ENCODE measurements at regions of chr18 and their contacts with region 1.

Region 1: DNA sequence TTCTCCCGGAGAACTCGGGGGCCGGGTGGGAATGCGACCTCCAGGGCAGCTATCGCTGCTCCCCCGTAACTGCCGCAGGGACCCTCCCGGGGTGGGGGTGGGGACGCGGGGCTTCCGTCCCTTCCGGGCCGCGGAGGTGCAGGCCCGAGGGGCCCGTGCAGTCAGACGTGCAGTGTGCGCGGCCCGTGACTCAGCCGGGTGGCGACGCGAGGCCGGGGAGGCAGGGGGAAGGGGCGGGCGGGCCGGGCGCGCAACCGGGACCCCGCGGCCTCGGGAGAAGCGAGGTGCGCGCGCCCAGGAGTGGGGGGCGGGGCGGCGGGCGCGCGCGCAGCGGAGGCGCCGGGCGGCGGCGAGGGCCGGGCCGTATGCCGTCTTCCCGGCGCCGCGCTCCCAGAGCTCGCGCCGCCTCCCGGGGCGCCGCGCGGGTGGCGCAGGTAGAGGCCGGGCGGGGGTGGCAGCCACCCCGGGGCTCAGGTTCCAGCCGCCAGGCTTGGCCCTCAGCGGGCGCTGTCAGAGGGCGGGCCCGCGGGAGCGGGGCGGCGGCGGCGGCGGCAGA is 25.0 kb upstream of the SMAD7 start:
- DNase-seq: peak in 1 of 2 donors; percentile 83
- H3K4me3 ChIP-seq: peak overlapping the region; percentile 93 to 94
- H3K27ac ChIP-seq: peak overlapping the region; percentile 84 to 89
- H3K4me1 ChIP-seq: peaks cover 4 to 6% of the 10 kb centered on the region in 2 donors
- H3K27me3 ChIP-seq: no peaks in the 10 kb centered on the region
- CTCF ChIP-seq: peak in 1 of 3 experiments; percentile 22

Region 2: GRCh38 chr18:48992699-48993555 is 17.2 kb after region 1 on chr18:
- intact Hi-C with region 1: loop called (anchors 1 kb)
- DNase-seq: no peak
- H3K4me3 ChIP-seq: no peak overlapping the region
- H3K27ac ChIP-seq: peak overlapping the region; percentile 77 to 86
- H3K4me1 ChIP-seq: peaks cover 30 to 62% of the 10 kb centered on the region in 2 donors
- H3K27me3 ChIP-seq: no peaks in the 10 kb centered on the region
- CTCF ChIP-seq: no peak

Region 3: GRCh38 chr18:49016631-49017539 is 41.2 kb after region 1 on chr18:
- intact Hi-C with region 1: loop called (anchors 1 kb)
- DNase-seq: peak in 1 of 2 donors; percentile 87
- H3K4me3 ChIP-seq: no peak overlapping the region
- H3K27ac ChIP-seq: peak overlapping the region; percentile 53 to 68
- H3K4me1 ChIP-seq: peaks cover 7 to 15% of the 10 kb centered on the region in 2 donors
- H3K27me3 ChIP-seq: no peaks in the 10 kb centered on the region
- CTCF ChIP-seq: no peak